ENCODE measurements at regions of chr6 and their contacts with region 1.

Region 1: GRCh38 chr6:111483736-111484632 is 966 bp upstream of the REV3L start:
- DNase-seq: peak; percentile 94
- ATAC-seq: peak; percentile 82
- H3K4me3 ChIP-seq: peak overlapping the region; percentile 92 to 95 (median 94)
- H3K27ac ChIP-seq: peak overlapping the region; percentile 98
- H3K4me1 ChIP-seq: peaks cover 39% of the 10 kb centered on the region
- H3K27me3 ChIP-seq: peaks cover 0 to 3% of the 10 kb centered on the region in 2 experiments; a peak in 1 of 5 replicates
- CTCF ChIP-seq: peak; percentile 27; the same call in 1 of the 2 replicates
- EP300 ChIP-seq: no peak
- POLR2A ChIP-seq: peak; percentile 91 to 99
- RAD21 ChIP-seq: no peak

Region 2: GRCh38 chr6:111494951-111495635 is 11.1 kb after region 1 on chr6:
- CTCF ChIA-PET with region 1: no interaction called
- POLR2A ChIA-PET with region 1: interaction called, 19 read pairs
- in situ Hi-C with region 1: no loop called
- intact Hi-C with region 1: no loop called
- DNase-seq: no peak
- ATAC-seq: no peak
- H3K4me3 ChIP-seq: no peak overlapping the region
- H3K27ac ChIP-seq: no peak overlapping the region
- H3K4me1 ChIP-seq: 0 out of 2 replicates have a peak, but pooled peaks cover 8% of the 10 kb centered on the region
- H3K27me3 ChIP-seq: no peaks in the 10 kb centered on the region
- CTCF ChIP-seq: no peak
- EP300 ChIP-seq: no peak
- POLR2A ChIP-seq: no peak
- RAD21 ChIP-seq: no peak

Region 3: DNA sequence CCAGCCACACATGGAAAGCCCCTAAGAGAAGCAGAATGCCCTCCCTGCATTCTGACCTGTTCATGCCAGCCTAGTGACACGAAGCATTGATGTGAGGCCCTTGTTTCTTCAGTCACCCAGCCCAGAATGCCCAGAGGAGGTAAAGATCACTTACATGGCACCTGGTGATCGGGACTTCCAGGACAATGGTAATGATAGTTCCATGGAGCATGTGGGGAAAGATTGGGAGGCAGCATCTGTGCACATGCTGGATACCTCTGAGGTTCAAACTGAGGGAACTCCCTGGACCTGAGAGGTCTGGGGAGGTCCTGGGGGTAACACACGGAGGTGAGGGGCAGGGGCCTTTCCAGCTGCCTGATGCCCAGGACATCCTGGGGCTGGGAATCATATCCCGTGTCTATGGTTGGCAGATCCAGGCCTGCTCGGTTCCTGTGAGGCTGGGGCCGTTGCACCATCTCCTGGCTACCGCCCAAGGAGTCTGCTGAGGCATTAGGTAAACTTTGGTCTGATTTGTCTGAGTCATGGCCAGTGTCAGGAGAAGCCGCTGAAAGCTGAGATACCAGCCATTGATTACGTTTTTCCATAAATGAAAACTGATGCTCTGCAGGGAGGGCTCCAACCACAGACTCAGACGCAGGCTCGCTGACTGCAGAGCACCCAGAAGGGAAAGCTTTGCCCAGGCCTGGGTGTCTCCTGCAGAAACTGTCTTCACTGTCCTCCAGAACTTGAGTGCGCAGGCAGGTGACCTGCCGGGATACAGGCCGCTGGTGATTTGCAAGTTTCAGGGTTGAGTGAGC is 107.3 kb after region 1 on chr6:
- CTCF ChIA-PET with region 1: no interaction called
- POLR2A ChIA-PET with region 1: interaction called, 5 read pairs
- in situ Hi-C with region 1: no loop called
- intact Hi-C with region 1: loop called (anchors 5 kb)
- DNase-seq: peak; percentile 88
- ATAC-seq: peak; percentile 91
- H3K4me3 ChIP-seq: 0 out of 6 replicates have a peak overlapping the region, but pooled peaks of 1 of the 3 experiments have one; percentile 5
- H3K27ac ChIP-seq: no peak overlapping the region
- H3K4me1 ChIP-seq: peaks cover 40% of the 10 kb centered on the region
- H3K27me3 ChIP-seq: no peaks in the 10 kb centered on the region
- CTCF ChIP-seq: peak; percentile 30; the same call in 1 of the 2 replicates
- EP300 ChIP-seq: peak; percentile 60 to 75; a peak in 3 of 4 replicates
- POLR2A ChIP-seq: no peak
- RAD21 ChIP-seq: no peak

Region 4: DNA sequence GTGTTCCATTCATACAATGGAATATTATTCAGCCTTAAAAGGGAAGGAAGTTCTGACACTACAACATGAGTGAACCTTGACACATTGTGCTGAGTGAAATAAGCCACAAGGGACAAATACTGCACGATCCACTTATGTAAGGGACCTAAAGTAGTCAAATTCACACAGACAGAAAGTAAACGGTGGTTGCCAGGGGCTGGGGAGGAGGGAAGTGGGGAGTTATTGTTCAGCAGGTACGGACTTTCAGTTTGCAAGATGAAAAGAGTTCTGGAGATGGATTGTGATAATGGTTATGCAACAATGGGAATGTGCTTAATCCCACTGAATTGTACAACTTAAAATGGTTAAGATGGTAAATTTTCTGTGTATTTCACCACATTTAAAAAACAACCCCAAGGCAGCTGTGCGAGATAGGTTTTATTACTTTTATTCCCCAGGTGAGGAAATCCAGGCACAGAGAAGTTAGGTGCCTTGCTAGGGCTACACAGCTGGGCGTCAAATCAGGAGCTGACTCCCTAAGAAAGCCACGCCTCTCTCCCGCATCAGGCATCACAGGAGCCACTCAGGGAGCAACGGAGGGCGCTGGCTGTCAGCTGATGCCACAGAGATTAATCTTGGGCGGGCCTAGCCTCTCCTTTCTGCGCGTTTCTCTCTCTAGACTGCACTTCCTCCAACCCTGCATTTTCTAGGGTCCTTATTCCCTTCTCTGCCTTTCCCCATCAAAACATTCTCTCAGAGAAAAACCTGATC is 131.0 kb after region 1 on chr6:
- CTCF ChIA-PET with region 1: no interaction called
- POLR2A ChIA-PET with region 1: interaction called, 4 read pairs
- in situ Hi-C with region 1: no loop called
- intact Hi-C with region 1: loop called (anchors 5 kb)
- DNase-seq: peak; percentile 64
- ATAC-seq: peak; percentile 39
- H3K4me3 ChIP-seq: peak overlapping the region; percentile 22 to 51 (median 49)
- H3K27ac ChIP-seq: no peak overlapping the region
- H3K4me1 ChIP-seq: peaks cover 64% of the 10 kb centered on the region
- H3K27me3 ChIP-seq: no peaks in the 10 kb centered on the region; a peak in 1 of 5 replicates
- CTCF ChIP-seq: no peak
- EP300 ChIP-seq: no peak
- POLR2A ChIP-seq: no peak
- RAD21 ChIP-seq: no peak